Activated T-helper 1 cell treated with anti-CD3 and anti-CD28 coated beads, Interleukin-12 subunit alpha, Interleukin-12 subunit beta, Interleukin-2, Interleukin-4 antibody, amounts not matched to agents 30 ng/mL and 10 ng/mL and 1 ng/mL, durations not matched to agents 14 hours and 24 hours and 36 hours (primary cell): ENCODE measurements at regions of chr6 and their contacts with region 1.

Region 1: GRCh38 chr6:89708316-89708715 is 69.8 kb upstream of the LYRM2 start:
- DNase-seq: no peak
- H3K4me3 Mint-ChIP-seq: no peak overlapping the region
- H3K27ac Mint-ChIP-seq: no peak overlapping the region
- H3K4me1 Mint-ChIP-seq: peaks cover 7% of the 10 kb centered on the region
- H3K27me3 Mint-ChIP-seq: no peaks in the 10 kb centered on the region

Region 2: GRCh38 chr6:89321131-89321970 is 387.0 kb before region 1 on chr6:
- intact Hi-C with region 1: no loop called
- DNase-seq: no peak
- H3K4me3 Mint-ChIP-seq: no peak overlapping the region
- H3K27ac Mint-ChIP-seq: no peak overlapping the region
- H3K4me1 Mint-ChIP-seq: no peaks in the 10 kb centered on the region
- H3K27me3 Mint-ChIP-seq: no peaks in the 10 kb centered on the region

Region 3: DNA sequence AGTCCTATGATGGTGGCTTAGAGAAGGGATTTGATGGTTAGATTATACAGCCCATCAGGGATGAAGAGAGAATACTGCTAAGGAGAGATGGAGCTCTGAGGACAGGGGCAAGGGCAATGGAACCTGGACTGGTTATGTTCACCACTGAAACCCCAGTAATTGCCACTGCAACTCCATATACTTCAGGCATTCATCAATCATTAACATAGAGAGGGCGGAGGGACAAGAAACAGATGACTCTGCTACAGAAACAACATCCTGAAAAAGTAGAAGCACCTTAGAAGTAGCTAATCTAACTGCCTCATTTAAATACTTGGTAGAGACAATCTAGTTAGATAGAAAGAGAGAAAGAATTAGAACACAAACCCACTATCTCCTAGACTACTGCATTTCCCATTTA is 21.5 kb after region 1 on chr6:
- intact Hi-C with region 1: no loop called
- DNase-seq: no peak
- H3K4me3 Mint-ChIP-seq: no peak overlapping the region
- H3K27ac Mint-ChIP-seq: no peak overlapping the region
- H3K4me1 Mint-ChIP-seq: no peaks in the 10 kb centered on the region
- H3K27me3 Mint-ChIP-seq: no peaks in the 10 kb centered on the region

Region 4: DNA sequence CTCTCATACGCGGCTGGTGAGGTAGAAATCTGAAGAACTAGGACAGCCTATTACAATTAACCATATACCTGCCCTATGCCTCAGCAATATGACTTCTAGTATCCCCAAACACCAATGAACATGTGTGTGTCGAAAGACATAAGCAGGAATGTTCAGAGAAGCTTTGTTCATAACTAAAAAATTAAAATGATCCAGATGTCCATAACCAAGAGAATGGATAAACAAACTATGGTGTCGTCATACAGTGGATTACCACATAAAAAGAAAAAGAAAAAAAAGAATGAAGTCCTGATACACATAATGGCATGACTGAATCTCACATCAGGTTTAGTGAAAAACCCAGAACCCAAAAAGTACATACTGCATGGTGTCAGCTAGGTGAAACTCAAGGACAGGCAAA is 37.4 kb after region 1 on chr6:
- intact Hi-C with region 1: loop called (anchors 5 kb)
- DNase-seq: no peak
- H3K4me3 Mint-ChIP-seq: no peak overlapping the region
- H3K27ac Mint-ChIP-seq: no peak overlapping the region
- H3K4me1 Mint-ChIP-seq: no peaks in the 10 kb centered on the region
- H3K27me3 Mint-ChIP-seq: no peaks in the 10 kb centered on the region